MCF 10A (cell line): ENCODE measurements at regions of chr6 and their contacts with region 1.

Region 1: DNA sequence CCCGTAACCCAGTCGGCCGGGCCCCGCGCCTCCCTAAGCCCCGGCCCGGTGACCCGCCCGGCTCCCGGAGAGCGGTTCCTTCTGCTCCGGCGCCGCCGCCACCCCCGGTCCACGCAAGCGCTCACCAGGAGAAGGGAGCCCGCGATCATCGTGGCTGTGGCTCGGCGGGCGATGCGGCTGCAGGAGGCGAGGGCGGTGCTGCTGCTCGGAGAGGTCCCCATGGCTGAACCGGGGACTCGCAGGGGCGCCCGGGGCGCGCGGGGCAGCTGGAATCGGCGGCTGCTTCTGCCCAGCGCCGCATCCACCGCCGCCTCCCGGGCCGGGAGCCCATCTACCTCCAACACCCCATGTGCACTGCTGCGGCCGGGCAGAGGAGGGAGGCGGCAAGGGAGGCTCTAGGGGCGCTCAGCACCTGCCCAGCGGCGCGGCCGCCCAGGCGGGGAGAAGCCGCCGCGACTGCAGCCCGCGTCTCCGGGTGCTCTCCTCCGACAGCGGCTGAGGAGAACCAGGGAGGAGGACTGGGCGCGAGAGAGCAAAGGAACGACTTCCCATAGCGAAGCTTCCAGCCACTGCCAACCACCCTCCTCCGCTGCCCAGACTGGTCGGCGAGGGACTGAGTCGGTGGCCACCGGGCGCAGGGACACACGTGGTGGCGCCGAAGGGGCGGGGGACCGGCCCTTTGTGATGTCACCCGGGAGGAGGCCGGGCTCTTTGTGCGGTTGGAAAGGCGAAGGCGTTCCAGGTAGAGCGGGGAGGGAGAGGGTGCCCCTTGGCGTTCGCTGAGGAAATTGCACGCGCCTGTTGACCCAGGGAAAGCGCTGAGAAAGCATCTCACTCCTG is at the start of gene TNFRSF21:
- DNase-seq: peak; percentile 91
- H3K4me3 Mint-ChIP-seq: peak within 1 kb of the TSS; percentile 89
- H3K27ac Mint-ChIP-seq: peak within 1 kb of the TSS; percentile 77
- H3K4me1 Mint-ChIP-seq: peaks cover 12% of the 10 kb centered on the region
- H3K27me3 Mint-ChIP-seq: no peaks in the 10 kb centered on the region
- CTCF ChIP-seq: peak; percentile 90
- total RNA-seq, gene TNFRSF21: 17.8 and 19.3 TPM in 2 replicates

Region 2: GRCh38 chr6:47188588-47189021 is 120.9 kb before region 1 on chr6:
- CTCF ChIA-PET with region 1: interaction called, 3 read pairs
- POLR2A ChIA-PET with region 1: interaction called, 3 read pairs
- intact Hi-C with region 1: loop called (anchors 1 kb)
- DNase-seq: peak; percentile 90
- H3K4me3 Mint-ChIP-seq: peak overlapping the region; percentile 26
- H3K27ac Mint-ChIP-seq: peak overlapping the region; percentile 61
- H3K4me1 Mint-ChIP-seq: peaks cover 15% of the 10 kb centered on the region
- H3K27me3 Mint-ChIP-seq: no peaks in the 10 kb centered on the region
- CTCF ChIP-seq: no peak

Region 3: DNA sequence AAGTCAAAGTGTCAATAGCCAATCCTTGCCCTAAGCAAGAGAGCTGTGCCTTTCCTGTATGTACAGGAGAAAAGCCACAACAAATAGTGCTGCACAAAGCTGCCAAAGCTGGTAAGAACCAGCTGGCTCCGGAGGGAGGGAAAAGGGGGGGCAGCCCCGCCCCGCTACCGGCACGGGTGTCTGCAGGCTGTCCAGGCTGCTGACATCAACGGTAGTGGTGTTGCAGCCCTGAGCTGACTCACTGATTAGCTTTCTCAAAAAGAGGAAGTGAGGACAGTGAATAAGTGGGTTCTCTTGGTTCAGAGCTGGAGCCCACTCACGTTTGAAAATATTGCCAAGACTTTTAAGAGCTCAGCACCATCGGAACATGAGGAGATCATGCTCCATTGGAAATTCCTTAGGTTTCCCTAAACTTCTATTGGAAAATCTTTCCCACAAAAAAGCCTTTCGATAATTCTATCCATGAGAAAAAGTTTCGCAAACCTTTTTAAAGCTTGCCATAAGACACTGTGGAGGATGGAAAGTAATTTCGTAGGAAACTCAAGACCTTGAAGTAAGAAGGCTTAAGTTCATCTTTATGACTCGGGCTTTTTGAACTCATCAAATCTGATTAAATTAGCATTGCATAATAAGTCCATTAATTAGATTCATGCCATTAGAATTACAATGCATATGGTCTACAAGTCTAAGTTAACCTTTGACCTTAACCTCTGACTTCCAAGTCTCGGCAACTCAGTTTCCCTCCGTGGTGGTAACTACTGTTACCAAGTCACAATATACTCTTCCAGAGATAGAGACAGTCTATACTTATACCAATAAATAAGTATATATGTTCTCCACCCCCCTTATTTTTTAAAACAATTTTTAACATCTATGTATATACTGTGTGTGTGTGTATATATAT is 66.8 kb before region 1 on chr6:
- CTCF ChIA-PET with region 1: interaction called, 8 read pairs
- POLR2A ChIA-PET with region 1: interaction called, 21 read pairs
- intact Hi-C with region 1: loop called (anchors 2 kb)
- DNase-seq: peak; percentile 94
- H3K4me3 Mint-ChIP-seq: peak overlapping the region; percentile 65
- H3K27ac Mint-ChIP-seq: peak overlapping the region; percentile 77
- H3K4me1 Mint-ChIP-seq: peaks cover 36% of the 10 kb centered on the region
- H3K27me3 Mint-ChIP-seq: no peaks in the 10 kb centered on the region
- CTCF ChIP-seq: no peak